Endothelial cell of umbilical vein (primary cell): ENCODE measurements at regions of chr11 and their contacts with region 1.

Region 1: GRCh38 chr11:17117262-17117661 is 39.8 kb upstream of the RPS13 start:
- DNase-seq: no peak
- H3K4me3 ChIP-seq: no peak overlapping the region
- H3K27ac ChIP-seq: no peak overlapping the region
- H3K4me1 ChIP-seq: peaks cover 12% of the 10 kb centered on the region
- H3K27me3 ChIP-seq: no peaks in the 10 kb centered on the region
- CTCF ChIP-seq: no peak
- POLR2A ChIP-seq: no peak

Region 2: GRCh38 chr11:17102462-17102861 is 14.8 kb before region 1 on chr11:
- CTCF ChIA-PET with region 1: interaction called, 12 read pairs
- POLR2A ChIA-PET with region 1: interaction called, 8 read pairs
- dilution Hi-C with region 1: no loop called
- intact Hi-C with region 1: no loop called
- DNase-seq: no peak
- H3K4me3 ChIP-seq: no peak overlapping the region
- H3K27ac ChIP-seq: no peak overlapping the region
- H3K4me1 ChIP-seq: peaks cover 3% of the 10 kb centered on the region
- H3K27me3 ChIP-seq: no peaks in the 10 kb centered on the region
- CTCF ChIP-seq: no peak
- POLR2A ChIP-seq: no peak